ENCODE measurements at regions of chr6 and their contacts with region 1.

Region 1: GRCh38 chr6:149368065-149368464 is 32.0 kb upstream of the SUMO4 start:
- DNase-seq: no peak
- ATAC-seq: no peak
- H3K4me3 ChIP-seq: no peak overlapping the region
- H3K4me3 Mint-ChIP-seq: no peak overlapping the region
- H3K27ac ChIP-seq: no peak overlapping the region
- H3K27ac Mint-ChIP-seq: no peak overlapping the region
- H3K4me1 ChIP-seq: peaks cover 67% of the 10 kb centered on the region
- H3K4me1 Mint-ChIP-seq: peaks cover 42% of the 10 kb centered on the region
- H3K27me3 ChIP-seq: no peaks in the 10 kb centered on the region
- H3K27me3 Mint-ChIP-seq: no peaks in the 10 kb centered on the region
- CTCF ChIP-seq: no peak

Region 2: GRCh38 chr6:149324428-149324827 is 43.6 kb before region 1 on chr6:
- CTCF ChIA-PET with region 1: no interaction called
- POLR2A ChIA-PET with region 1: interaction called, 3 read pairs
- intact Hi-C with region 1: loop called in 1 of 2 experiments (anchors 2 kb)
- DNase-seq: no peak
- ATAC-seq: no peak
- H3K4me3 ChIP-seq: no peak overlapping the region
- H3K4me3 Mint-ChIP-seq: peak overlapping the region; percentile 33
- H3K27ac ChIP-seq: no peak overlapping the region
- H3K27ac Mint-ChIP-seq: no peak overlapping the region
- H3K4me1 ChIP-seq: peaks cover 78% of the 10 kb centered on the region
- H3K4me1 Mint-ChIP-seq: peaks cover 79% of the 10 kb centered on the region
- H3K27me3 ChIP-seq: no peaks in the 10 kb centered on the region
- H3K27me3 Mint-ChIP-seq: no peaks in the 10 kb centered on the region
- CTCF ChIP-seq: no peak

Region 3: GRCh38 chr6:149403534-149403933 is 35.5 kb after region 1 on chr6:
- CTCF ChIA-PET with region 1: no interaction called
- POLR2A ChIA-PET with region 1: no interaction called
- intact Hi-C with region 1: loop called in 1 of 2 experiments (anchors 5 kb)
- DNase-seq: no peak
- ATAC-seq: no peak
- H3K4me3 ChIP-seq: no peak overlapping the region
- H3K4me3 Mint-ChIP-seq: no peak overlapping the region
- H3K27ac ChIP-seq: no peak overlapping the region
- H3K27ac Mint-ChIP-seq: no peak overlapping the region
- H3K4me1 ChIP-seq: no peaks in the 10 kb centered on the region
- H3K4me1 Mint-ChIP-seq: no peaks in the 10 kb centered on the region
- H3K27me3 ChIP-seq: no peaks in the 10 kb centered on the region
- H3K27me3 Mint-ChIP-seq: no peaks in the 10 kb centered on the region
- CTCF ChIP-seq: no peak

Measured in CD8-positive, alpha-beta T cell (primary cell).